Cardiac septum (tissue), 1 donor: ENCODE measurements at regions of chr9 and their contacts with region 1.

Region 1: GRCh38 chr9:122350638-122351355 is 20.0 kb upstream of the PTGS1 start:
- DNase-seq: peak; percentile 91

Region 2: DNA sequence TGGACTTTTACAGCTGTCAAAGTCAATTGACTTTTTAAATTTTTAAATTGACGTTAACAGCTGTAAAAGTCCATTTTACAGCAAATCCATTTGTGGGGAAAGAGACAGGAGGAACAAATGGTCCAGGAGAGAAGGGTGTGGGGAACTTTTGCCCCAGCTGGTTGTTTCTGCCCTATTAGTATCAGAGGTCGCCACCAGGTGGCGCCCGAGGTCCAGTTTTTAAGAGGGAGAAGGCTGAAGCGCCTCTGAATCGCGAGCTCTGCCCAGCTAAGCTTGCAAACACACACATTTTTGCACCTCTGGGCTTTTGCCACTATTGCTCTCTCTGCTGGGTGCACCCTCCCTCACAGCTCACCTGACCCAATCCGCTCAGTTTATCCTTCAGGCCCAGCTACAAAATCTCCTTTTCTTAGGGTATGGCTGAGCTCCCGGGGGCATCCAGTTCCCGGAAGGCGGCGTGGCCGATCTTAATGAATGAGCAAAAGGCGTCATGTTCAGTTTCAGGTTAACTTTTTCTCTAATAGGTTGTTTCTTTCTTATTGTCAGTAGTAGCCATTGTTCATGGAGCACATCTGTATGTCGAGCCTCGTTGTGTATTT is 251.4 kb before region 1 on chr9:
- intact Hi-C with region 1: loop called (anchors 1 kb)
- DNase-seq: peak; percentile 91

Region 3: GRCh38 chr9:122125158-122125508 is 225.7 kb before region 1 on chr9:
- intact Hi-C with region 1: loop called (anchors 1 kb)
- DNase-seq: peak; percentile 89

Region 4: GRCh38 chr9:122213589-122214413 is 137.0 kb before region 1 on chr9:
- intact Hi-C with region 1: no loop called
- DNase-seq: peak; percentile 74

Region 5: DNA sequence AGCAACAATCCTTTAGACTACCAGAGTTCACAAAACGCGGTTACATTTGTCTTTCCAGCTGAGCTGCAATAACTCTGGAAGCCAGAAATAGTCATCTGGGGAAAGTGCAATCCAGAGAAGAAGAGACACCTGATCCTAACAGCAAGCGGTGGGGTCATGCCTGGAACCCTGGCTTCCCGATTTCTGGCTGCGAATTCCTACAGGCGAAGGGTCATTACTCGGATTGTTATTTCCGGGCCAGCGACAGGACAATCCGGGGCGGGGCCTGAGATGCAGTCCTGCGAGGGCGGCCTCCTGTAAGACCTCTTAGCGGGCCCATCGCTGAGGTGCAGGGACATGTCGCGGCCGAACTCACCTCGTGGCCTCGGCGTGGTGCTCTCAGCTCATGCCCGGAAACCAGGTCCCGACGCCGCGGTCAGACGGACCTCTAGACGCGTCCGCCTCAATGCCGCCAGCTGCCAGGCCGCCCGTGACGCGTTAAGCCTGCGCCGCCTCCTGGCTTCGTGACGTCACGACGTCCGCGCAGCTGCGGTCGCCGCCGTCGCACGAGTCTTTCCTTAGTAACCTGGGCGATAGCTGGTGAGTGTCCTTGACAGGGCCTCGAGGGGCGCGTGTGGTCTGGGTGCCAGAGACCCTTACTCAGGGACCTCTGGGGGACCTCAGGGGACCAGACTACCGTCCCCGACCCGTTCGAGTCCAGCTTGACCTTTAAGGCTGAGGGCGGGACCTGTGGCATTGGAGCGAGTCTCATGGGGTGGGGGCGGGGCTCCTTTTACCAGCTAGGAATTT is 86.2 kb before region 1 on chr9 and contains the starts of genes MRRF and RBM18:
- intact Hi-C with region 1: loop called (anchors 2 kb)
- DNase-seq: peak; percentile 96
- total RNA-seq, gene MRRF: 35.9 TPM
- total RNA-seq, gene RBM18: 32.3 TPM

Region 6: DNA sequence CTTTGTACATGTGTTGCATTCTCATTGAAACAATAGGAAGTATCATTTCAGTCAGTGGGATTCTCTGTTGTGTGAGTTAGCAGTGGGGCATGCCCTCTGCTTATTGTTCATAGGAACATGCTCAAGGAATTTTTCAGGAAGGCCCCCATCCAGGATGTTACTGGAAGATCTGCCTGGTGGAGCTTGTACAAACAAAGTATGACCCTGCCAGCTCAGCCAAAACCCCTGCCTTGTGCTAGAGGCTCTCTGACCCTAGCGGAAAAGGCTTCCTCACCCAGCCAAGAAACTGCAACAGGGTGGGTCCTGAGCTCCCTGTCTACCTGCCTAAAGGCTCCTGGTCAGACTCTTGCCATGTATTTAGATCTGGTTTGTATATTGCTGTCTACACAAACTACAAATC is 42.9 kb before region 1 on chr9:
- intact Hi-C with region 1: loop called (anchors 5 kb)
- DNase-seq: no peak